CD4-positive, alpha-beta memory T cell (primary cell): ENCODE measurements at regions of chr6 and their contacts with region 1.

Region 1: GRCh38 chr6:142845624-142846458 is 99.1 kb downstream of the HIVEP2 start:
- DNase-seq: peak; percentile 59 to 77 (median 62)
- H3K4me3 ChIP-seq: peak overlapping the region; percentile 31 to 55
- H3K4me3 Mint-ChIP-seq: peak overlapping the region; percentile 78 to 95 (median 87)
- H3K27ac ChIP-seq: peak overlapping the region; percentile 83
- H3K27ac Mint-ChIP-seq: peak overlapping the region; percentile 89 to 99 (median 96)
- H3K4me1 ChIP-seq: peaks cover 96% of the 10 kb centered on the region
- H3K4me1 Mint-ChIP-seq: peaks cover 65 to 99% (median 85%) of the 10 kb centered on the region in 4 donors
- H3K27me3 ChIP-seq: no peaks in the 10 kb centered on the region
- H3K27me3 Mint-ChIP-seq: no peaks in the 10 kb centered on the region

Region 2: GRCh38 chr6:142746524-142746923 is 99.3 kb before region 1 on chr6:
- CTCF ChIA-PET with region 1: interaction called, 5 read pairs
- POLR2A ChIA-PET with region 1: interaction called, 12 read pairs
- intact Hi-C with region 1: loop called (anchors 5 kb)
- DNase-seq: peak in 4 of 5 donors; percentile 29 to 42 (median 34)
- H3K4me3 ChIP-seq: no peak overlapping the region
- H3K4me3 Mint-ChIP-seq: no peak overlapping the region
- H3K27ac ChIP-seq: no peak overlapping the region
- H3K27ac Mint-ChIP-seq: peak overlapping the region in 1 of 7 donors; percentile 16
- H3K4me1 ChIP-seq: peaks cover 5% of the 10 kb centered on the region
- H3K4me1 Mint-ChIP-seq: peaks cover 3 to 11% (median 9%) of the 10 kb centered on the region in 4 donors
- H3K27me3 ChIP-seq: no peaks in the 10 kb centered on the region
- H3K27me3 Mint-ChIP-seq: no peaks in the 10 kb centered on the region

Region 3: GRCh38 chr6:142819603-142820337 is 26.1 kb before region 1 on chr6:
- CTCF ChIA-PET with region 1: interaction called, 13 read pairs
- POLR2A ChIA-PET with region 1: interaction called, 50 read pairs
- intact Hi-C with region 1: no loop called
- DNase-seq: peak; percentile 45 to 84 (median 52)
- H3K4me3 ChIP-seq: peak overlapping the region; percentile 37 to 48
- H3K4me3 Mint-ChIP-seq: peak overlapping the region; percentile 76 to 92 (median 90)
- H3K27ac ChIP-seq: peak overlapping the region; percentile 76
- H3K27ac Mint-ChIP-seq: peak overlapping the region; percentile 87 to 100 (median 94)
- H3K4me1 ChIP-seq: peaks cover 88% of the 10 kb centered on the region
- H3K4me1 Mint-ChIP-seq: peaks cover 62 to 84% (median 71%) of the 10 kb centered on the region in 4 donors
- H3K27me3 ChIP-seq: no peaks in the 10 kb centered on the region
- H3K27me3 Mint-ChIP-seq: peaks cover 0 to 3% of the 10 kb centered on the region in 2 donors

Region 4: GRCh38 chr6:142833054-142833453 is 12.8 kb before region 1 on chr6:
- CTCF ChIA-PET with region 1: interaction called, 9 read pairs
- POLR2A ChIA-PET with region 1: interaction called, 20 read pairs
- intact Hi-C with region 1: loop called (anchors 1 kb)
- DNase-seq: no peak
- H3K4me3 ChIP-seq: no peak overlapping the region
- H3K4me3 Mint-ChIP-seq: peak overlapping the region in 5 of 8 donors; percentile 8 to 68 (median 38)
- H3K27ac ChIP-seq: no peak overlapping the region
- H3K27ac Mint-ChIP-seq: peak overlapping the region in 4 of 7 donors; percentile 15 to 77 (median 68)
- H3K4me1 ChIP-seq: peaks cover 53% of the 10 kb centered on the region
- H3K4me1 Mint-ChIP-seq: peaks cover 60 to 83% (median 73%) of the 10 kb centered on the region in 4 donors
- H3K27me3 ChIP-seq: no peaks in the 10 kb centered on the region
- H3K27me3 Mint-ChIP-seq: no peaks in the 10 kb centered on the region

Region 5: GRCh38 chr6:142871910-142872331 is 26.1 kb after region 1 on chr6:
- CTCF ChIA-PET with region 1: interaction called, 4 read pairs
- POLR2A ChIA-PET with region 1: interaction called, 20 read pairs
- intact Hi-C with region 1: no loop called
- DNase-seq: peak; percentile 64 to 88 (median 71)
- H3K4me3 ChIP-seq: no peak overlapping the region
- H3K4me3 Mint-ChIP-seq: peak overlapping the region; percentile 45 to 77 (median 65)
- H3K27ac ChIP-seq: peak overlapping the region; percentile 65
- H3K27ac Mint-ChIP-seq: peak overlapping the region; percentile 76 to 98 (median 95)
- H3K4me1 ChIP-seq: peaks cover 94% of the 10 kb centered on the region
- H3K4me1 Mint-ChIP-seq: peaks cover 74 to 95% (median 82%) of the 10 kb centered on the region in 4 donors
- H3K27me3 ChIP-seq: no peaks in the 10 kb centered on the region
- H3K27me3 Mint-ChIP-seq: no peaks in the 10 kb centered on the region

Region 6: GRCh38 chr6:142926494-142927270 is 80.8 kb after region 1 on chr6:
- CTCF ChIA-PET with region 1: interaction called, 4 read pairs
- POLR2A ChIA-PET with region 1: interaction called, 35 read pairs
- intact Hi-C with region 1: no loop called
- DNase-seq: peak; percentile 82 to 87 (median 86)
- H3K4me3 ChIP-seq: peak overlapping the region; percentile 82 to 86
- H3K4me3 Mint-ChIP-seq: peak overlapping the region; percentile 88 to 99 (median 94)
- H3K27ac ChIP-seq: peak overlapping the region; percentile 98
- H3K27ac Mint-ChIP-seq: peak overlapping the region; percentile 90 to 100 (median 98)
- H3K4me1 ChIP-seq: peaks cover 60% of the 10 kb centered on the region
- H3K4me1 Mint-ChIP-seq: peaks cover 42 to 77% (median 56%) of the 10 kb centered on the region in 4 donors
- H3K27me3 ChIP-seq: no peaks in the 10 kb centered on the region
- H3K27me3 Mint-ChIP-seq: no peaks in the 10 kb centered on the region